ENCODE measurements at regions of chr7 and their contacts with region 1.

Region 1: DNA sequence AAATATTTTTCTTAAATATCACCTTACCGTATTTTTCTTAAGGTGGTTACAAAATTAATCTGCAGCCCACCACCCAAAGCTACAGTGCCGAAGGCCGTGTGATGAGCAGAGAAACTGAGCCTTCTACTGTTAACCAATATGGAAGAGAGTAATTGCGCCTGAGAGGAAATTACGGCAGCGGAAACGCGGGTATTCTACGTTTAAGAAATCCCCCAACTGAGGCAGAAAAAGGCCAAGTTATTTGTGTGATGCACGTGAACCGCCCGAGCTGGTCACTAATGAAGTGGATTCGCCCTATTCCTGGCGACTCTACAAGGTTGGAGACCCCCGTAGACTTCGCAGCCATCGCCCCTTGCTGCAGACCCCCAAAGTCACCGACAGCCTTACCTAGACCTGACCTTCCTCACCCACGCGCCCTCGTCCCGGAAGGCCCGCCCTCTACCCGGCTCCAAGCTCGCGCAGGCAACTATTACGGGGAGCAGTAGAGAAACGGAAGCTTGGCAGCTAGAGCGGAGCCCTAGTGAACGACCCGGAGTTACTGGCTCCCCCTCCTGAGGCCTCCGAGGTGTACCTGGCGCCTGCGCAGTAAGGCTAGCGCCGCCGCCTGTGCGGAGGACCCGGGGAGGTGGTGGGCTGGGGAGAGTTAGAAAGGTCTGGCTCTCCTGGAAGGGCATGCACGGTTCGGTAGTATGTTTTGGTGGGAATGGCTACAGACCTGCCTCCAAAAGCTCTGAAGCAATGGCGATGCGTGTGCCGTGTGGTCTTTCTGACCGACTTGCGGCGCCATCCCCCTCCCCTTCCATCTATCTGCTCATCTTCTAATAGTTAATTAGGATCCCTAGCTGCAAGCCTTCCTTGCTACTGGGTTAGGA is at the start of gene MRPS33:
- DNase-seq: peak; percentile 89
- ATAC-seq: peak; percentile 97
- H3K4me3 ChIP-seq: peak within 1 kb of the TSS; percentile 86
- H3K27ac ChIP-seq: peak within 1 kb of the TSS; percentile 95
- H3K4me1 ChIP-seq: peaks cover 10% of the 10 kb centered on the region
- H3K27me3 ChIP-seq: no peaks in the 10 kb centered on the region
- CTCF ChIP-seq: peak; percentile 72 to 93 (median 80)
- EP300 ChIP-seq: no peak; a peak in 1 of 4 replicates
- POLR2A ChIP-seq: peak; percentile 99
- RAD21 ChIP-seq: no peak
- polyA plus RNA-seq, gene MRPS33: 336 to 372 TPM

Region 2: DNA sequence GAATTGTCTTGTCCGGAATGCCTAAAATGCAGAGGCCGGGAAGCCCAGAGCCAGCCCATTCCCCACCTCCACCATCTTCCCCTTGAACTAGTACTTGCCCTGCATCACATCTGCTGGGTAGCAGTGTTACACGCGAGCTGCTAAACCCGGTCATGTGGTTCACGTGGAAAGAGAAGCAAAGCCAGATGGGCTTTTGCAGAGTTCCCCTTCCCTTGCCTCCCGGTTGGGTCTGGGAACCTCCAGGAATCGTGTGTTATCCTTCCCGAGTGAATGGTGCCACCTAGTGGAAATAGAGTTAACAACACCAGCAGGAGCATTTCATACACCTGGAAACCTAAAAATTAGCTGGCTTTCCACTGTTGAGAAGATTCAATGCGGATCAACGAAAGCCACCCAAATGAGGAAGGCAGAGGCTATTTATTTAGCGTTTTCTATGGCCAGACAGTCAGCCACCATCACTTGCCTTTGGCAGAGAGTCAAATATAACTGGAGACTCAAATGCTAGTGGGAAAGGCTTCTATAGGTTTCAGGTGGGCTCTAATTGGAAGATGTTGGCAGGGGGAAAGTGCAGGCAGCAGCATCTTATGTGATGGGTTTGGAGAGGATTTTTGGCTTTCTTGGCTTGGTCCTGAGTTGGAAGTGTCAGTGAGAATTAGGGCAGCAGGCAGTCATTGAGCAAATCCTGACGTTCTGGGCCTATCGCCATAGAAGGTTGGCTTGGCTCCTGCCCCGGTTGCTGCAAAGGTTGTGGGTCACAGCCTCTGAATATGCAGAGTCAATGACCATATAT is 361.2 kb before region 1 on chr7:
- CTCF ChIA-PET with region 1: interaction called, 4 read pairs
- POLR2A ChIA-PET with region 1: no interaction called
- RAD21 ChIA-PET with region 1: no interaction called
- SMC1A ChIA-PET with region 1: no interaction called
- in situ Hi-C with region 1: no loop called
- intact Hi-C with region 1: loop called (anchors 5 kb)
- DNase-seq: no peak
- ATAC-seq: peak; percentile 61
- H3K4me3 ChIP-seq: no peak overlapping the region
- H3K27ac ChIP-seq: no peak overlapping the region
- H3K4me1 ChIP-seq: peaks cover 12% of the 10 kb centered on the region
- H3K27me3 ChIP-seq: no peaks in the 10 kb centered on the region
- CTCF ChIP-seq: peak; percentile 79 to 88 (median 81)
- EP300 ChIP-seq: no peak
- POLR2A ChIP-seq: no peak
- RAD21 ChIP-seq: peak; percentile 90

Region 3: GRCh38 chr7:140726281-140726680 is 288.5 kb before region 1 on chr7:
- CTCF ChIA-PET with region 1: interaction called, 10 read pairs
- POLR2A ChIA-PET with region 1: no interaction called
- RAD21 ChIA-PET with region 1: interaction called, 5 read pairs
- SMC1A ChIA-PET with region 1: interaction called, 3 read pairs
- in situ Hi-C with region 1: no loop called
- intact Hi-C with region 1: no loop called
- DNase-seq: no peak
- ATAC-seq: no peak
- H3K4me3 ChIP-seq: no peak overlapping the region
- H3K27ac ChIP-seq: no peak overlapping the region
- H3K4me1 ChIP-seq: no peaks in the 10 kb centered on the region
- H3K27me3 ChIP-seq: no peaks in the 10 kb centered on the region
- CTCF ChIP-seq: peak; percentile 16 to 31 (median 29); a peak in 4 of 6 replicates
- EP300 ChIP-seq: no peak
- POLR2A ChIP-seq: no peak
- RAD21 ChIP-seq: peak; percentile 34; the same call in 1 of the 2 replicates

Region 4: DNA sequence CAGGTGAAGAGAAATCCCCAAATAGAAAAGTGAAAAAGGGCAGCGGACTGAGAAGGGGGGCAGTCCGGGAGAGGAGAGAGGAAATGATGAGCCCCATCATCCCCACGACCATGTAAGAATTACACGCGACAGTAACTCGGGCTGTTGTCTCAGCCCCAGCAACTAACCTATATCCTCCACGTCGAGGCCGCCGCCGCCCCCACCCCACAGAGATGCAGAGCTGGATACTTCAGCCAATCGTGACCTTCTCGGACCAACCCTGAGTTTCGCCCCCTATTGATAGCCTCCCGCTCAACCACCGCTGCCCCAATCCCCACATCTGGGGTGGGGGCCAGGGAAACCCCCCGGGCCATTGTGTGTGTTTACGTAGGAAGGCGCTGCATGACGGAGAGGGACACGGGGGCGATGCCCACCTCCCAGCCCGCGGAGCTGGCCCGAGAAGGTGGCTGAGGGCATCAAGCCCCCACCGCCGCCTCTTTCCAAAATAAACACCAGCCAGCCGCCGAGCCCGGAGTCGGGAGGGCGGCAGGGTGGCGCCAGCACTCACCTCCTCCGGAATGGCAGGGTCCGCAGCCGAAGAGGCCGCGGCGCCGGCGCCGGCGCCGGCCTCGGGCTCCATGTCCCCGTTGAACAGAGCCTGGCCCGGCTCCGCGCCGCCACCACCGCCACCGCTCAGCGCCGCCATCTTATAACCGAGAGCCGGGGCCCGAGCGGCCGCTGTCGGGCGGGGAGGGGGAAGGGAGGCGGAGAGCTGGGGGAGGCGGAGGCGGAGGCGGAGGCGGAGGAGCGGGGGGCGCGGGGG is 90.5 kb before region 1 on chr7:
- CTCF ChIA-PET with region 1: interaction called, 18 read pairs
- POLR2A ChIA-PET with region 1: interaction called, 3 read pairs
- RAD21 ChIA-PET with region 1: no interaction called
- SMC1A ChIA-PET with region 1: interaction called, 3 read pairs
- in situ Hi-C with region 1: no loop called
- intact Hi-C with region 1: no loop called
- DNase-seq: peak; percentile 50
- ATAC-seq: peak; percentile 89
- H3K4me3 ChIP-seq: peak overlapping the region; percentile 98
- H3K27ac ChIP-seq: peak overlapping the region; percentile 94
- H3K4me1 ChIP-seq: no peaks in the 10 kb centered on the region
- H3K27me3 ChIP-seq: no peaks in the 10 kb centered on the region
- CTCF ChIP-seq: peak; percentile 44 to 60 (median 45)
- EP300 ChIP-seq: peak in 1 of 2 experiments; percentile 42; a peak in 1 of 4 replicates
- POLR2A ChIP-seq: peak; percentile 75
- RAD21 ChIP-seq: no peak

Region 5: GRCh38 chr7:141533149-141533949 is 518.6 kb after region 1 on chr7:
- CTCF ChIA-PET with region 1: interaction called, 4 read pairs
- POLR2A ChIA-PET with region 1: no interaction called
- RAD21 ChIA-PET with region 1: no interaction called
- SMC1A ChIA-PET with region 1: interaction called, 3 read pairs
- in situ Hi-C with region 1: no loop called
- intact Hi-C with region 1: loop called (anchors 5 kb)
- DNase-seq: no peak
- ATAC-seq: peak; percentile 89
- H3K4me3 ChIP-seq: no peak overlapping the region
- H3K27ac ChIP-seq: no peak overlapping the region
- H3K4me1 ChIP-seq: no peaks in the 10 kb centered on the region
- H3K27me3 ChIP-seq: no peaks in the 10 kb centered on the region
- CTCF ChIP-seq: peak; percentile 88 to 97 (median 95)
- EP300 ChIP-seq: no peak
- POLR2A ChIP-seq: no peak
- RAD21 ChIP-seq: peak; percentile 90

Region 6: GRCh38 chr7:141737834-141738591 is 723.3 kb after region 1 on chr7 and contains the start of gene SSBP1:
- CTCF ChIA-PET with region 1: interaction called, 7 read pairs
- POLR2A ChIA-PET with region 1: no interaction called
- RAD21 ChIA-PET with region 1: interaction called, 7 read pairs
- SMC1A ChIA-PET with region 1: no interaction called
- in situ Hi-C with region 1: loop called (anchors 10 kb)
- intact Hi-C with region 1: loop called (anchors 1 kb)
- DNase-seq: peak; percentile 92
- ATAC-seq: peak; percentile 91
- H3K4me3 ChIP-seq: peak within 1 kb of the TSS; percentile 98
- H3K27ac ChIP-seq: peak within 1 kb of the TSS; percentile 91
- H3K4me1 ChIP-seq: peaks cover 4% of the 10 kb centered on the region; the same call in 1 of the 2 replicates
- H3K27me3 ChIP-seq: no peaks in the 10 kb centered on the region
- CTCF ChIP-seq: peak; percentile 83 to 98 (median 84)
- EP300 ChIP-seq: no peak; a peak in 1 of 4 replicates
- POLR2A ChIP-seq: peak; percentile 99
- RAD21 ChIP-seq: peak; percentile 49
- polyA plus RNA-seq, gene SSBP1: 802 to 998 TPM